Ascending aorta (tissue), 2 donors: ENCODE measurements at regions of chr1 and their contacts with region 1.

Region 1: DNA sequence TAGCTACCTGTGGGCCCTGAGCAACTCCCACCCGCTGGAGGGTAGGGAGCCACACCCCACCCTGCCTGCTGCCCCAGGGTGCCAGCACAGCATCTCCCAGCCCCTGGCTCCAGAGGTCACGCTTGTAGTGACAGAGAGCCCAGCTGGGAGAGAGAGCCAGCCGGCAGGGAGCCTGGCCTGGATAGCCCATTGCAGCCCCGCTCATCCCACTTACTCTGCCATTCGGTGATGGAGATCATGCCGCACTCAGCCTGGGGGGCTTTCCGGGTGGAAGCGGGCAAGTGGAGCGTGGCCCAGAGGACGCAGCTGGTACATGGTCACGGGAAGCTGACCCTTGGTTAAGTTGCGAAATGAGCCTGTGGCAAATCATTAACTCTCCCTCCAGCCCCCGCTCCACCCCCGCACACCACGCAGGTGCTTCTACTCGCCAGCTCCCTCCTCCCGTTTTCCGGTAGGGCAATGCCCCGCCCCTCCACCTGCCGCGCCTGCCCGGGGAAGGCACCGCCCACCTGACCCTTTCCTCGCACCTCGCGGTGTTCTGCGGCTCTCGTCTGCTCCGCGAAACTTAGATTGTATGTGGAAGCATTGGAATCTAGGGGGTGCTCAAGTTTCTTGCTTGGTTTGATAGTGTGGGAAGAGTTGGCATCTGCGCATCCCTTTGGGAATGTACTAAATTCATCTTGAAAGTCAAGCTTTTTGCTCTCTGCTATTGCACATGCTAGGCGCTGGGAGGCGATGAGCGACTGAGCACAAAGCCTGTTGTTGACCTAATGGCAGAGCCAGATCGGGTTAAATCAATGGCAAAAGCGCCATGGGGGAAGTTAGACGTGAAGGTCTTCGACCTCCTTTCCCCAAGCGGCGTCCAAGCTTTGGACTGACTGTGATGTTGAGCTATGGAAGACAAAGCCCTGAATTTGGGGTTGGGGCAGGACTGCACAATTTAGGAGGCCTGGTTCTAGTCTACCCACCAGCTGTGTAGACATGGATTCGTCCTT is at the start of gene GOLT1A:
- DNase-seq: no peak
- H3K4me3 ChIP-seq: no peak within 1 kb of the TSS
- H3K27ac ChIP-seq: no peak within 1 kb of the TSS
- H3K4me1 ChIP-seq: no peaks in the 10 kb centered on the region
- H3K27me3 ChIP-seq: no peaks in the 10 kb centered on the region
- CTCF ChIP-seq: peak; percentile 20 to 60 (median 50)
- total RNA-seq, gene GOLT1A: not detected

Region 2: GRCh38 chr1:204104133-204104871 is 109.7 kb before region 1 on chr1:
- intact Hi-C with region 1: no loop called
- DNase-seq: no peak
- H3K4me3 ChIP-seq: no peak overlapping the region
- H3K27ac ChIP-seq: peak overlapping the region in 1 of 2 donors; percentile 19
- H3K4me1 ChIP-seq: peaks cover 0 to 23% of the 10 kb centered on the region in 2 donors
- H3K27me3 ChIP-seq: no peaks in the 10 kb centered on the region
- CTCF ChIP-seq: no peak

Region 3: DNA sequence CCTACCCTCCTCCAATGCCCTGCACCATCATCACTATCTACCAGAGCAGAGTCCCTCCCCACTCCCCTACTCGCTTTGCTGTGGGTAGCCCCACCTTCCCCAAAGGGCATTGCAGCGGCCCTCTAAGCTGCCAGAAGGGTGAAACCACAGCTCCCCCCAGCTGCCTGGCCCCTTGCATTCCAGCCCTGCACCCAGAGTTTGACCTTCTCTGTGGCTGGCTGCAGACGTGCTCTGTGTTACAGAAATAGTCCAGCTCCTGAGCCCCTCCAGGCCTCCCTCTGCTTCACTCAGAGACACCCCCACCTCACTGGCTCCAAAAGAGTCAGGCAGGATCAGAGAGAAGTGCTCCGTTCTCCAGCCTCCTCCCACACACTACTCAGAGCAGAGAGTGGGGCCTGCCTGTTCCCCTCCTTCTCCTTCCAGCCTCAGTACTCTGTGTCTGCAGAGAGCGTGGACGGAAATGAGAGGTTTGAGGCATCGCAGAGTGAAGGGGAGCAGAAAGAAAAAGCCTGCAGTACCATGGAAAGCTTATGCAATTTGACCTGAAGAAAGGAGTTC is 82.5 kb after region 1 on chr1:
- intact Hi-C with region 1: no loop called
- DNase-seq: no peak
- H3K4me3 ChIP-seq: no peak overlapping the region
- H3K27ac ChIP-seq: no peak overlapping the region
- H3K4me1 ChIP-seq: peaks cover 0 to 3% of the 10 kb centered on the region in 2 donors
- H3K27me3 ChIP-seq: no peaks in the 10 kb centered on the region
- CTCF ChIP-seq: no peak

Region 4: DNA sequence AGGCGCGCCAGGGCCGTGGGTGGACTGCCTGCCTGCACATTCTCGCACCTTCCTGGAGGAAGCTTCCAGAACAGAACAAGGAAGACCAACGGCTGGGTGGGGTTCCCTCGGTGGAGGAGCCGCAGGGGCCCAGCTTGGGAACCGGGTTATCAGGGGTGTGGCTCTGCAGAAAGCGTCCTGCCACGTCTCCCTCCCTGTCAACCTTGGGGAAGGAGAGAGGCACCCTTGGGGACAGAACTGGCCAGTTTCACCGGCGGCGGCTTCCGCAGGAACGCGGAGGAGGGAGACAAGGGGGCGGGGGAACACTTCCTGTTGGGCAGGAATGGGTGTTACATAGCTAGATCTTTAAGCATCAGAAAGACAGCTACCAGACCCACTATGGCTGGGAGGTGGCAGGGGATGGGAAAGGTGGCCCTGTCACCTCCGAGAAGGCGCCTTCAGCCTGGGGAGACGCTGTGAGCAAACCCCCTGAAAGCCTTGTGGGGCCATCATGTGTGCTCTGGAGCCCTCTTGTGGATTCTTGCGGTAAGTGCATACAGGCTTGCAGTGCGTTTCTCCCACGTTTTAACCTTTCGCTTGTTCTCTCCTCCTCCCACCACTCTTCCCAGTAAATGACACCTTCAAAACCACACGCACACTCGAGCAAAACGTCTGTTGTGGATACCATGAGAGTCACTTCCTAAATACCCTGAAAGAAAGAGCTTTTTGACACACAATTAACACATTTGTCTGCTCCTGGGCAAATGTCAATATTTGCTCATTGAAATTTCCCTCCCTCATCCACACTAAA is 149.6 kb after region 1 on chr1:
- intact Hi-C with region 1: loop called (anchors 5 kb)
- DNase-seq: peak in 1 of 2 donors; percentile 82
- H3K4me3 ChIP-seq: peak overlapping the region; percentile 48 to 64
- H3K27ac ChIP-seq: no peak overlapping the region
- H3K4me1 ChIP-seq: peaks cover 2 to 4% of the 10 kb centered on the region in 2 donors
- H3K27me3 ChIP-seq: no peaks in the 10 kb centered on the region
- CTCF ChIP-seq: peak; percentile 91 to 99 (median 95)